K562 (cell line): ENCODE measurements at regions of chr4 and their contacts with region 1.

Region 1: GRCh38 chr4:153773236-153773690 is 13.4 kb upstream of the RNF175 start:
- DNase-seq: peak; percentile 71 to 90 (median 82)
- ATAC-seq: peak; percentile 99
- H3K4me3 ChIP-seq: no peak overlapping the region
- H3K27ac ChIP-seq: peak overlapping the region; percentile 72
- H3K4me1 ChIP-seq: peaks cover 0 to 15% of the 10 kb centered on the region in 2 experiments; a peak in 2 of 5 replicates
- H3K27me3 ChIP-seq: no peaks in the 10 kb centered on the region
- CTCF ChIP-seq: peak; percentile 28 to 54 (median 51); a peak in 4 of 6 replicates
- EP300 ChIP-seq: peak; percentile 88
- POLR2A ChIP-seq: no peak
- RAD21 ChIP-seq: peak; percentile 25 to 67

Region 2: GRCh38 chr4:154024097-154024694 is 250.9 kb after region 1 on chr4:
- CTCF ChIA-PET with region 1: no interaction called
- POLR2A ChIA-PET with region 1: no interaction called
- in situ Hi-C with region 1: no loop called
- intact Hi-C with region 1: loop called (anchors 5 kb)
- DNase-seq: peak in 2 of 4 experiments; percentile 15 to 42
- ATAC-seq: peak; percentile 99
- H3K4me3 ChIP-seq: no peak overlapping the region
- H3K27ac ChIP-seq: no peak overlapping the region
- H3K4me1 ChIP-seq: peaks cover 0 to 4% of the 10 kb centered on the region in 2 experiments; a peak in 2 of 5 replicates
- H3K27me3 ChIP-seq: peaks cover 0 to 3% of the 10 kb centered on the region in 2 experiments; a peak in 1 of 5 replicates
- CTCF ChIP-seq: peak; percentile 52 to 67 (median 59)
- EP300 ChIP-seq: no peak
- POLR2A ChIP-seq: no peak
- RAD21 ChIP-seq: peak; percentile 55 to 69